ENCODE measurements at regions of chr1 and their contacts with region 1.

Region 1: DNA sequence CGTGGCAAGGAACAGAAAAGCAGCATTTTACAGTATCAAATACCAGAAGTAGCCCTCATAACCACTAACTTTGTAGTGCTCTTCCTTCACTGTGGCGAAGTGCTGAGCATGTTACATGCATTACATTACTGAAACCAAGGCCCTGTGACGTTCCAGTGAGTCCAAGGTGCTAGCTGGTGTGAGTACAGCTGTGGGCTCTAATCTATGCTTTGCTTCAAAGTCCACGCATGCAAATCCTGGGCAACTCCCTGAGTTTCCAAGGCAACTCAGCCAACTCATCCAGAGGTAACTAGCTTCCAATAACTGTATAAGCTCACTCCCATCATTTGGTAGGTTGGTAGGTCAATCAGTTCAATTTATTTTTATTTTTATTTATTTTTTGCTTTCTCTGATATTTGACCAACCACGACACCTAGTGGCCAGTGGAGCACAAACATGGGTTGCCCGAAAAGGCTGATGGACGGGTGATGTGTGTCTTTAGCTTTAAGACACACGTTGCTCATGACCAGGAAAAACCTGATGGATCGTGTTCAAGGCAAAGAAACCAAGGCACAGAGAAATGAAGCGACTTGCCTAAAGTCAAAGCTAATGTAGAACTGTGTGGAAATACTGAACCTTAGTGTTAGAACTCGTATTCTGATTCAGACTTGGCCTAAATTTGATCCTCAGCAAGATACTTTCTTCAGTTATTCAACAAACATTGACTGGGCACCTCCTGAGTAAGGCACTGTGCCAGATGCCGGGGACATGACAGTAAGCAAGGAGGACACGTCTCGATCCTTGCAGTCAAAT is 73.0 kb downstream of the GNG12 start:
- DNase-seq: peak in 1 of 2 experiments; percentile 74
- H3K4me3 ChIP-seq: no peak overlapping the region
- H3K27ac ChIP-seq: no peak overlapping the region
- H3K4me1 ChIP-seq: no peaks in the 10 kb centered on the region
- H3K27me3 ChIP-seq: no peaks in the 10 kb centered on the region; a peak in 1 of 7 replicates
- CTCF ChIP-seq: peak; percentile 59 to 84 (median 61)
- EP300 ChIP-seq: no peak
- POLR2A ChIP-seq: no peak
- RAD21 ChIP-seq: peak; percentile 88

Region 2: DNA sequence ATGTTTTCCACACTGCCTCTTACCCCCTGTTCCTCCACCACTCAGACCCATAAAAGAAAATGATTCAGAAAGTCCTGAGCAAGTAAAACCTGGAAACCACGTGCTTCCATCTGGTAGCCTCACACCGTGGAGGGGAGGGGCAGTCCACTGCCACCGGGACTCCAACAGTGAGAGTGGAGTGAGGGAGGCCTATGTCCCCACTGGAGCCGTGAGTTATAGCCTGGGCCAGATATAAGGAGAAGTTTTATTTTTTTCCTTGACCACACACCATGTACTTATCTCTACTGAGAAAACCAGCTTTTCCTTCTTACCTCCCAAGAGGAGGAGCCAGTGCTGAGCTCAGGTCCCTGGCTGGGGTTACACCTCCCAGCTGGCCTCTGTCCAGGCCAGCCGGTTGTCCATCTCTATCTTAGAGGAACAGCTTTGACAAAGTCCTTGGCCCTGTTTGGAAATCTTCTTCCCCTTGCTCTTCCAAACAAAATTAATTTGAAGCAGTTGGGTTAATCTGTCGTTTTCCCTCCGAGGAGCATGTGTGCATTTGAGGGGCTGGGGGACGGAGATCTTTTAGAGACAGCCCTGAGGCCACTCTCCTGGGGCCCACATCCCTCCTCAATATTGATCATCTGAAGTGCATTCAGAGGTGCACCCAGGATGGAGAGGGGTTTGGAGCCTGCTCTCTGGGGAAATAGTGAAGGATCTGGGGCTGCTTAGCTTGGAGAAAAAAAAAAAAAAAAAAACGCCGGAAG is 280.9 kb before region 1 on chr1:
- CTCF ChIA-PET with region 1: no interaction called
- POLR2A ChIA-PET with region 1: no interaction called
- DNase-seq: no peak
- H3K4me3 ChIP-seq: no peak overlapping the region
- H3K27ac ChIP-seq: no peak overlapping the region
- H3K4me1 ChIP-seq: peaks cover 0 to 1% (median 0%) of the 10 kb centered on the region in 4 experiments; a peak in 1 of 7 replicates
- H3K27me3 ChIP-seq: no peaks in the 10 kb centered on the region
- CTCF ChIP-seq: no peak
- EP300 ChIP-seq: no peak
- POLR2A ChIP-seq: no peak
- RAD21 ChIP-seq: no peak

Region 3: GRCh38 chr1:67524143-67525052 is 235.8 kb before region 1 on chr1:
- CTCF ChIA-PET with region 1: interaction called, 21 read pairs
- POLR2A ChIA-PET with region 1: no interaction called
- DNase-seq: no peak
- H3K4me3 ChIP-seq: no peak overlapping the region
- H3K27ac ChIP-seq: no peak overlapping the region
- H3K4me1 ChIP-seq: no peaks in the 10 kb centered on the region
- H3K27me3 ChIP-seq: peaks cover 14 to 36% (median 22%) of the 10 kb centered on the region in 4 experiments
- CTCF ChIP-seq: peak in 2 of 3 experiments; percentile 5 to 48; a peak in 2 of 4 replicates
- EP300 ChIP-seq: no peak
- POLR2A ChIP-seq: no peak
- RAD21 ChIP-seq: peak in 1 of 2 experiments; percentile 32; a peak in 1 of 4 replicates

Region 4: GRCh38 chr1:67540733-67541125 is 219.5 kb before region 1 on chr1:
- CTCF ChIA-PET with region 1: interaction called, 161 read pairs
- POLR2A ChIA-PET with region 1: interaction called, 3 read pairs
- DNase-seq: no peak
- H3K4me3 ChIP-seq: no peak overlapping the region
- H3K27ac ChIP-seq: no peak overlapping the region
- H3K4me1 ChIP-seq: no peaks in the 10 kb centered on the region
- H3K27me3 ChIP-seq: no peaks in the 10 kb centered on the region
- CTCF ChIP-seq: no peak
- EP300 ChIP-seq: no peak
- POLR2A ChIP-seq: no peak
- RAD21 ChIP-seq: no peak

Region 5: DNA sequence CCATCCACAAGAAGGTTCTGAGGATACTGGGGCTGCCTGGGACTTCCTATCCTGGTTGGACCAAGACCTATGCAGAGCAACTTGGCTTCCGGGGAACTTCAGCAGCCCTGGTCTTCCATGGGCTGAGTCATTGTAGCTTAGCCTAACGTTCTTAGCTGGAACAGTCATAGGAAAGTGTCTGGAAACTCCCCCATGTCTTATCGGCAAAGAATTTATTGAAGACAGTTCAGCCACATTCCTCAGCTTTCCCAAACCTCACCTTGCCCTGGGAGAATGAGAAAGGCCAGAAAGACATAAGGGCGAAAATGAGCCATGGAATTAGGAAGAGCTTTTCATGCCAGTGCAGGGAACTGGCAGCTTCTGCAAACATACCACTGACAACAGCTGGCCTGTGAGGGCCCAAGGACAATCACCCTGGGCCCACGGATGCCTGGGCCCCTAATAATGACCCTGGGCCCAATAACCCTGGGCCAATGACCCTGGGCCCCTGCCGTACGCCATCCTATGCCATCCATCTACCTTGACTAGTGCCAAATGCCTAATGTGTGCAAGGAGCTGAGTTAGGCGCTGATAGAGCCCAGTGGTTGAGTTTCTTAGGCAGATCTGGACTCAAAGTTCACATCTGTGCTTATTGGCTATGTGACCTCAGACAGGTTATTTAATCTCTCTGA is 189.6 kb before region 1 on chr1:
- CTCF ChIA-PET with region 1: interaction called, 36 read pairs
- POLR2A ChIA-PET with region 1: no interaction called
- DNase-seq: no peak
- H3K4me3 ChIP-seq: no peak overlapping the region
- H3K27ac ChIP-seq: no peak overlapping the region
- H3K4me1 ChIP-seq: no peaks in the 10 kb centered on the region
- H3K27me3 ChIP-seq: no peaks in the 10 kb centered on the region
- CTCF ChIP-seq: no peak
- EP300 ChIP-seq: no peak
- POLR2A ChIP-seq: no peak
- RAD21 ChIP-seq: no peak

Region 6: DNA sequence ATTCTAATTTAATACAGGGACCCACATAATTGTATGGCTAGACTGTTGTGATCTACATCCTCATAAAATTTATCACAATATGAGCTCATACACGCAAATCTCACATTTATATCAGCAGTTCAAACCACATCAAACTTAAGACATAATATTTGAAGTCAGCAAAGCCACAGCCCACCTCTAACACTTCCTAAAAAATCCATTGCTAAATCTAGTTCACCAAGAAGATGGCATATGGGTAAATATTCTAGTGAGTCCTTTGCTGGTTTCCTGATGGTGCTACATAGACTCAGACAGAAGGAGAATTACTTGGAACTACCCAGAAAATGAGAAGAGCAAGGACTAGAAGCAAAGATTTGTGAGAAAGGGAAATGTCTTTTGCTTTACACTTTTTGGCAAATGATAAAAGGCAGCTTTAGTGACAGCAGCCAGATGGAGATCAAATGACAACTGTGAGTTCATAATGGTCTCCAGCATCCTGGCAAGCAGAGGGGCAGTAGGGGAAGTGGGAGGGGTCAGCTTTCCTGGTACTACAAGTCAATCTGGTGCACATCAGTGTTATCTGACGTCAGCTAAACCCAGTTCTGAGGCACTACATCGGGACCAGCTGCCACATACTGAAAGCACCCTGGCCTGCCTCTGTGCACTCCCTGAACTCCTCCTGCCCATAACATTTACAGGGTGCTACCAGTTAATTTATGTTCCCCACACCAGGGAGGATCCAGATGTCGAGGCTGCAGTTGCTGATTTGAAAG is 85.8 kb before region 1 on chr1:
- CTCF ChIA-PET with region 1: interaction called, 29 read pairs
- POLR2A ChIA-PET with region 1: no interaction called
- DNase-seq: no peak
- H3K4me3 ChIP-seq: no peak overlapping the region
- H3K27ac ChIP-seq: no peak overlapping the region
- H3K4me1 ChIP-seq: no peaks in the 10 kb centered on the region
- H3K27me3 ChIP-seq: no peaks in the 10 kb centered on the region
- CTCF ChIP-seq: no peak
- EP300 ChIP-seq: no peak
- POLR2A ChIP-seq: no peak
- RAD21 ChIP-seq: no peak

Region 7: GRCh38 chr1:67700692-67701410 is 59.4 kb before region 1 on chr1:
- CTCF ChIA-PET with region 1: interaction called, 24 read pairs
- POLR2A ChIA-PET with region 1: no interaction called
- DNase-seq: peak in 1 of 2 experiments; percentile 31
- H3K4me3 ChIP-seq: no peak overlapping the region
- H3K27ac ChIP-seq: no peak overlapping the region
- H3K4me1 ChIP-seq: peaks cover 0 to 3% (median 0%) of the 10 kb centered on the region in 4 experiments; a peak in 2 of 7 replicates
- H3K27me3 ChIP-seq: no peaks in the 10 kb centered on the region
- CTCF ChIP-seq: peak; percentile 50 to 61 (median 52)
- EP300 ChIP-seq: no peak
- POLR2A ChIP-seq: no peak
- RAD21 ChIP-seq: peak; percentile 30 to 36

Region 8: DNA sequence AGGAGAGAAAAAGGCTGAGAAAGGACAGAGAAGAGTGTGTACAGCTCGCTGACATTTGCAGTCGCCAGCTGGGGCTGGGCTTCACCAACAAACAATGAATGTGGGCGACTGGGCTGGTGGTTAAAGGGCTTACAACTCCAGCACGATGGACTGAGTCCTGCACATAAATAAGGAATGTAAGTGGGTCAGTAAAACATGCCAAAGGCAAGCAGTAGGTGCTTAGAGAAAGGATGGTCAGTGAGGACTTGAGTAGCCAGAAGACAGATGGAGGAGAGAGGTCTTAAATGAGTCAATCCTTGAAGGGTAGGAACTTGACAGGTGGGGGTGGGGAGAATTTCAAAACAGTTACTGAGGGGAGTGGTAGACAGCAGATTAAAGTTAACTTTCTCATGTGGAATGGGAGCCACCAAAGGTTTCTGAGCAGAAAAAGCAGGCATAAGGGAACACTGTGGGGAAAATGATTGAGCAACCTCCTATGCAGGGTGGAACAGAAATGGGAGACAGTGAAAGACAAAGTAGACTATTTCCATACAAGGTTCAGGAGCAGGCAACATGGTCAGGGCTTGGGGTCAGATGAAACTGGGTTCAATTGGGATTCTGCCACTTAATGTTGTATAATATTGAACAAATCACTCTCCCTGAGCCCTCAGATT is 37.8 kb before region 1 on chr1:
- CTCF ChIA-PET with region 1: interaction called, 24 read pairs
- POLR2A ChIA-PET with region 1: no interaction called
- DNase-seq: no peak
- H3K4me3 ChIP-seq: no peak overlapping the region
- H3K27ac ChIP-seq: no peak overlapping the region
- H3K4me1 ChIP-seq: peaks cover 0 to 7% (median 3%) of the 10 kb centered on the region in 4 experiments; a peak in 3 of 7 replicates
- H3K27me3 ChIP-seq: no peaks in the 10 kb centered on the region
- CTCF ChIP-seq: no peak
- EP300 ChIP-seq: no peak
- POLR2A ChIP-seq: no peak
- RAD21 ChIP-seq: no peak

Region 9: GRCh38 chr1:67921725-67922489 is 161.7 kb after region 1 on chr1:
- CTCF ChIA-PET with region 1: no interaction called
- POLR2A ChIA-PET with region 1: no interaction called
- DNase-seq: no peak
- H3K4me3 ChIP-seq: no peak overlapping the region
- H3K27ac ChIP-seq: no peak overlapping the region
- H3K4me1 ChIP-seq: no peaks in the 10 kb centered on the region
- H3K27me3 ChIP-seq: no peaks in the 10 kb centered on the region
- CTCF ChIP-seq: no peak
- EP300 ChIP-seq: no peak
- POLR2A ChIP-seq: no peak
- RAD21 ChIP-seq: no peak

Region 10: GRCh38 chr1:67948151-67949080 is 188.2 kb after region 1 on chr1:
- CTCF ChIA-PET with region 1: no interaction called
- POLR2A ChIA-PET with region 1: no interaction called
- DNase-seq: no peak
- H3K4me3 ChIP-seq: no peak overlapping the region
- H3K27ac ChIP-seq: no peak overlapping the region
- H3K4me1 ChIP-seq: no peaks in the 10 kb centered on the region; a peak in 1 of 7 replicates
- H3K27me3 ChIP-seq: no peaks in the 10 kb centered on the region
- CTCF ChIP-seq: no peak
- EP300 ChIP-seq: no peak
- POLR2A ChIP-seq: no peak
- RAD21 ChIP-seq: no peak

Region 11: GRCh38 chr1:68057564-68057963 is 297.3 kb after region 1 on chr1:
- CTCF ChIA-PET with region 1: no interaction called
- POLR2A ChIA-PET with region 1: no interaction called
- DNase-seq: no peak
- H3K4me3 ChIP-seq: no peak overlapping the region
- H3K27ac ChIP-seq: no peak overlapping the region
- H3K4me1 ChIP-seq: peaks cover 0 to 4% (median 0%) of the 10 kb centered on the region in 4 experiments; a peak in 3 of 7 replicates
- H3K27me3 ChIP-seq: no peaks in the 10 kb centered on the region
- CTCF ChIP-seq: peak; percentile 58 to 71 (median 62)
- EP300 ChIP-seq: no peak
- POLR2A ChIP-seq: no peak
- RAD21 ChIP-seq: peak; percentile 27 to 43; a peak in 3 of 4 replicates